ENCODE measurements at regions of chr5 and their contacts with region 1.

Region 1: DNA sequence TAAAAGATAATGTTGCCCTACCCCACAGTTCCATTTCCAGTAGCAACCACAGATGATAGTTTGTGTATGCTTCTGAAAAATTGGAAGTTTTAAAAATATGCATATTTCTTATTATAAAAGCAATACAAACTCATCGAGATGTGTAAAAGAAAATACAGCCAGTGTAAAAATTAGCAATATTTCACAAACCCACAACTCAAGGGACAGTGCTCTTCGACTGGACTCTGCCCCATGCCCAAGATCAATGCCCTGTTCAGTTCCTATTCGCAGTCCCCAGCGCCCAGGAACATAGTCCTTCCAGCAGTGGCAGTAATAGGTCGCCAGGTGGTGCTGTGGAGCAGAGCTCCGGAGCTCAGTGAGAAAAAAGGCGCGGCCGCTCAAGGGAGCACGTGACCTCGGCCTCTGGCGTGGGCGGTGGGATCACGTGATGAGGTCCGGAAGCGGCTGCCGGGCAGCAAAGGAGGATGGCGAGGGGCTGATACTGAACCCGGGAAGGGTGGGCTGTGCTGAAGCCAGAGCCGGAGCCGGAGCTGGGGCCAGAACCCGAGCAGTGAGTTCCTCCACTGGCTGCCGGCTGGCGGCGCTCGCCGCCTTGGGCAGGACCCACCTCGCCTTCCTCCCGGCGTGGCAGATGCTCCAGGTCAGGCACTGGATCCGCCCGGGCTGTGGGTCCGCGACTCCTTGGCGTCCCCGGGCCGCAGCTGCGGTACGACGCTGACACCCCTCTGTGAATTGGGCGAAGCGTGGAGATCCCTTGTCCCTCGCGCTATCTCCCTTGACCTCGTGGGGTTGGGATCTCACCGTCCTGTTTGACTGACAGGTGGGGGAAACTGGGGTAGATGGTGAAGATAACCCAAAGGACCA is at the start of gene SLC36A1:
- DNase-seq: peak; percentile 80
- ATAC-seq: peak; percentile 94
- H3K4me3 ChIP-seq: peak within 1 kb of the TSS; percentile 75 to 96
- H3K27ac ChIP-seq: peak within 1 kb of the TSS; percentile 78
- H3K4me1 ChIP-seq: peaks cover 6% of the 10 kb centered on the region
- H3K27me3 ChIP-seq: no peaks in the 10 kb centered on the region
- CTCF ChIP-seq: peak; percentile 96
- total RNA-seq, gene SLC36A1: 13.6 TPM

Region 2: DNA sequence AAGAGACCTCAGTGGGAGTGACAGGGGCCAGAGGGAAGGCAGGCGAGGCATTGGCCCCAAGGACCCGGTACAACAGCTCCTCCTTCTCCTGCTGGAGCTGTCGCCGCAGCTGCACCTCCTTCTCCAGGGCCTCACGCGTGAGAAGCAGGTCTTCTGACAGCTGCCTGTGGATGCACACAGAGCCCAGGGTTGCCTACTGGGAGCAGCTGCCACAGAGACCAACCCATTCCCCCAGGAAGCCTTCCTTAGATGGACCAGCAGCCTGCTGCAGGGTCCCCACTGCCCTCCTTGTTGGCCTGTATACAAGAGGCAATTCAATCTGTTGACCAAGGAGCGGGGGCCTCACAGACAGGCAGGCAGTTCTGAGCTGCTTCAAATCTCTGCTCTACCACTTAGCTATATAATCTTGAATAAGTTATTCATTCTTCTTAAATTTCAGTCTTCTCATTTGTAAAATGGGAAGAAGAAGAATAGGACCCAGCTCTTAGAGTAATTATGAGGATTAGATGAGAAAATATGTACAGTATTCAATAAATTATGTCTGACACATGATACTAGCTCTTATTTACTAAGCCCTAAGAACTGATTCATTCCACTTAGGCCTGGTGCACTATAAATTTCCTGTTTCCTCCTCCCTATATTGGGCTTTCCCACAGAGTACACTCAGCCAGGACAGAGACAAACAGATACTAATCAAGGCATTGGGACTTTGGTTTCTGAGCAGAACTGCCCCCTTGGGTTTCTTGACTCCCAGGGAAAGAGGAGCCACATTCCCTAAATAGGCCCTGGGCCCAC is 263.8 kb before region 1 on chr5:
- CTCF ChIA-PET with region 1: no interaction called
- POLR2A ChIA-PET with region 1: no interaction called
- in situ Hi-C with region 1: no loop called
- intact Hi-C with region 1: no loop called
- DNase-seq: no peak
- ATAC-seq: peak; percentile 41; the same call in 1 of the 2 replicates
- H3K4me3 ChIP-seq: no peak overlapping the region
- H3K27ac ChIP-seq: no peak overlapping the region
- H3K4me1 ChIP-seq: no peaks in the 10 kb centered on the region
- H3K27me3 ChIP-seq: no peaks in the 10 kb centered on the region
- CTCF ChIP-seq: no peak

Region 3: DNA sequence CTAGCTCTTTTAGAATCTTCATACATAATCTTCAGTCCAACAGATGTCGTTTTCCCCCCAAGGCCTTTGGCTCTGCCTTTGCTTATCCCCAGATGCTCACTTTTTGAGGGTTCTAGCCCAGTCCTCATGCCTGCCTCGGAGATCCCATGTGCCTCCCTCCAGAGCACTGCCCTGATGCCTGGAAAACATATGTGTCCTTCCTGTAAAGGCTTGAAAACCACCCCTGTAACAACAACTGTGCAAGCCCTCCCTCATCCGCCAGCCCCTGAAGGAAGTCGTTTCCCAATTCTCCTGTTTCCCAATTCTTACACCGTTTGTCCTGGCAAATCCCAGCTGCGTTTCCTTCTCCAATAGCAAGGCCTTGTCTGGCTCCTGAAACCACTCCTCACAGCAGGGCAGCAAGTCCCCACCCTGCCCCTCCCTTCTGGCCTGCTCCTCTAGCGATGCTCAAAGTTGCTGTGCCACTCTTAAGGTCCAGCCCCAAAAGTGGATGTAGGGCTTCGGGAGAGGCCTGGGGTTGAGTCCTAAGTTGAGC is 52.2 kb after region 1 on chr5:
- CTCF ChIA-PET with region 1: interaction called, 3 read pairs
- POLR2A ChIA-PET with region 1: no interaction called
- in situ Hi-C with region 1: no loop called
- intact Hi-C with region 1: loop called (anchors 1 kb)
- DNase-seq: no peak
- ATAC-seq: no peak
- H3K4me3 ChIP-seq: no peak overlapping the region
- H3K27ac ChIP-seq: no peak overlapping the region
- H3K4me1 ChIP-seq: no peaks in the 10 kb centered on the region
- H3K27me3 ChIP-seq: no peaks in the 10 kb centered on the region
- CTCF ChIP-seq: no peak

Region 4: DNA sequence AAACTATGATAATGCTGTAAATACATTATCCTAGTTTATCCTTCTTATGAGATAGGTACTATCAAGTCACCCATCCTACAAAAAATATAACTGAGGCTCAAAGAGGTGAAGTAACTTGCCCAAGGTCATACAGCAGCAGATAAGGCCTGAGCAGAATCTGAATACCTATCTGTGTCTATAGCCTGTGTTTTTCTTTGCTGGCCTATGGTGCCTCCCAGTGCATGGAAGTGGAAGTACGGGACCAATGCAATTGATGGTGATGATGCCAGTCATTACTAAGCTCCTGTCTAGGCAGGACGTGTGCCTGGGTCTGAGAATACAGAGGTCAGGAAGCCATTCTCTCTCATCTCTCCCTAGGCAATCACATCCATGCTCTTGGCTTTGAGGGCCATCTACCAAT is 75.9 kb after region 1 on chr5:
- CTCF ChIA-PET with region 1: interaction called, 7 read pairs
- POLR2A ChIA-PET with region 1: interaction called, 3 read pairs
- in situ Hi-C with region 1: no loop called
- intact Hi-C with region 1: loop called (anchors 1 kb)
- DNase-seq: peak; percentile 41
- ATAC-seq: peak; percentile 92
- H3K4me3 ChIP-seq: no peak overlapping the region
- H3K27ac ChIP-seq: no peak overlapping the region
- H3K4me1 ChIP-seq: no peaks in the 10 kb centered on the region
- H3K27me3 ChIP-seq: 0 out of 2 replicates have a peak, but pooled peaks cover 6% of the 10 kb centered on the region
- CTCF ChIP-seq: peak; percentile 80

Region 5: GRCh38 chr5:151740336-151740942 is 293.0 kb after region 1 on chr5:
- CTCF ChIA-PET with region 1: no interaction called
- POLR2A ChIA-PET with region 1: no interaction called
- in situ Hi-C with region 1: no loop called
- intact Hi-C with region 1: loop called (anchors 2 kb)
- DNase-seq: peak; percentile 54
- ATAC-seq: peak; percentile 75
- H3K4me3 ChIP-seq: no peak overlapping the region
- H3K27ac ChIP-seq: peak overlapping the region; percentile 90
- H3K4me1 ChIP-seq: peaks cover 45% of the 10 kb centered on the region
- H3K27me3 ChIP-seq: no peaks in the 10 kb centered on the region
- CTCF ChIP-seq: peak; percentile 92

Measured in Panc1 (cell line).